ENCODE measurements at regions of chr9 and their contacts with region 1.

Region 1: DNA sequence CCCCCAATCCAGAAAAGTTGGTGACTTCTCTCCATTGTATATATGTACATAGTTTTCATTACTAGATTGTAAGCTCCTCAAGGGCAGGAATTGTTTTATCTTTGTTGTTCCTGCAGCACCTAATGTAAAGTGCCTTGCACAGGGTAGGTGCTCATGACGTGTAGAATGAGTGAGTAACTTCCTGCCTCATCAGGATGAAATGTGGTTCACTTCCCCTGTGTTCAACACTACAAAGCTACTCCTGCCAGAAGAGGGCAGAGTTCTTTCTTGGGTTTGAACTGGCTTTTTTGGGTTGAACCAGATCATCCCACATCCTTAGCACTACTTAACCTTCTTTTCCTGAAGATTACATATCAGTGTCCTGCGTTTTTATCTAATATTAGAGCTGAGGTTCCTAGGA is 23.9 kb downstream of the GTF3C4 start:
- H3K4me3 ChIP-seq: no peak overlapping the region
- H3K27ac ChIP-seq: no peak overlapping the region
- H3K4me1 ChIP-seq: no peaks in the 10 kb centered on the region
- CTCF ChIP-seq: no peak

Region 2: DNA sequence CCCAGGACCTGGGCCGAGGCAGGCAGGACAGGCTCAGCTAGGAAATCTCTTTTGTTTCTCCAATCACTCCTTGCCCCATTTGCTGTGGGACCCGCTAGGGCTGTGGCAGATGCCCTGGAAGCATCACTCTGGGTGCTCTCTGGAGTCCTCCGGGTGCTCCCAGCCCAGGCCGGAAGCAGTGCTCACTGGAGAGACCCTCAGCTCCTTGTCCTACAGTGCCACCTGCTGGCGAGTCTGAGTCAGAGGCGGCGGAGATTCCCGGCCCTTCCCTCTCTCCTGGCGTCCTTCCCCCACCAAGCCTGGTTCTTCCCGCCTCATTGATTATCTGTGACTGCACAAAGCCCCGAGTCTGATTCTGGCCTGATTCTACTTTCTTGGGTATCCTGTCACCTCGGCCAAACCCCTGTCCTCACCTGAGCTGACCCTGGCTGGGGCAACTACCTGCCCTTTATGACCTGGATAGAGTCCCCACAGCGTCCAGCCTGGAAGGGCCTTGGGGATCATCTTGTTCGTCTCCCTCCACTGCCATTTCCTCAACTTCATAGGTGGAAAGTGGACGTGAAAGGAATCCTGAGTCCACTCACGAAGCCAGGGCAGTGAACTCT is 119.0 kb before region 1 on chr9:
- CTCF ChIA-PET with region 1: no interaction called
- POLR2A ChIA-PET with region 1: no interaction called
- H3K4me3 ChIP-seq: no peak overlapping the region
- H3K27ac ChIP-seq: no peak overlapping the region
- H3K4me1 ChIP-seq: no peaks in the 10 kb centered on the region
- CTCF ChIP-seq: peak; percentile 93

Region 3: GRCh38 chr9:132651254-132651653 is 42.9 kb before region 1 on chr9:
- CTCF ChIA-PET with region 1: no interaction called
- POLR2A ChIA-PET with region 1: no interaction called
- H3K4me3 ChIP-seq: no peak overlapping the region
- H3K27ac ChIP-seq: no peak overlapping the region
- H3K4me1 ChIP-seq: no peaks in the 10 kb centered on the region
- CTCF ChIP-seq: peak; percentile 35; the same call in 1 of the 2 replicates

Region 4: GRCh38 chr9:132721661-132722060 is 27.5 kb after region 1 on chr9:
- CTCF ChIA-PET with region 1: no interaction called
- POLR2A ChIA-PET with region 1: no interaction called
- H3K4me3 ChIP-seq: no peak overlapping the region
- H3K27ac ChIP-seq: no peak overlapping the region
- H3K4me1 ChIP-seq: no peaks in the 10 kb centered on the region
- CTCF ChIP-seq: no peak

Region 5: GRCh38 chr9:132800038-132800648 is 106.0 kb after region 1 on chr9:
- CTCF ChIA-PET with region 1: interaction called, 20 read pairs
- POLR2A ChIA-PET with region 1: no interaction called
- H3K4me3 ChIP-seq: no peak overlapping the region
- H3K27ac ChIP-seq: no peak overlapping the region
- H3K4me1 ChIP-seq: peaks cover 8% of the 10 kb centered on the region
- CTCF ChIP-seq: peak; percentile 87

Region 6: GRCh38 chr9:133008824-133009223 is 314.7 kb after region 1 on chr9:
- CTCF ChIA-PET with region 1: no interaction called
- POLR2A ChIA-PET with region 1: no interaction called
- H3K4me3 ChIP-seq: no peak overlapping the region
- H3K27ac ChIP-seq: no peak overlapping the region
- H3K4me1 ChIP-seq: no peaks in the 10 kb centered on the region
- CTCF ChIP-seq: no peak

Measured in HEK293 (cell line).